PC-9 (cell line): ENCODE measurements at regions of chr11 and their contacts with region 1.

Region 1: GRCh38 chr11:105783216-105783615 is 173.3 kb downstream of the GRIA4 start:
- DNase-seq: no peak
- H3K4me3 ChIP-seq: no peak overlapping the region
- H3K27ac ChIP-seq: no peak overlapping the region
- H3K4me1 ChIP-seq: no peaks in the 10 kb centered on the region
- H3K27me3 ChIP-seq: no peaks in the 10 kb centered on the region
- CTCF ChIP-seq: no peak

Region 2: GRCh38 chr11:104817973-104818372 is 965.2 kb before region 1 on chr11:
- CTCF ChIA-PET with region 1: no interaction called
- POLR2A ChIA-PET with region 1: interaction called, 18 read pairs
- intact Hi-C with region 1: no loop called
- DNase-seq: peak in 1 of 2 experiments; percentile 18
- H3K4me3 ChIP-seq: no peak overlapping the region
- H3K27ac ChIP-seq: no peak overlapping the region
- H3K4me1 ChIP-seq: no peaks in the 10 kb centered on the region
- H3K27me3 ChIP-seq: no peaks in the 10 kb centered on the region
- CTCF ChIP-seq: no peak

Region 3: GRCh38 chr11:104934594-104934993 is 848.6 kb before region 1 on chr11:
- CTCF ChIA-PET with region 1: no interaction called
- POLR2A ChIA-PET with region 1: no interaction called
- intact Hi-C with region 1: no loop called
- DNase-seq: no peak
- H3K4me3 ChIP-seq: no peak overlapping the region
- H3K27ac ChIP-seq: no peak overlapping the region
- H3K4me1 ChIP-seq: no peaks in the 10 kb centered on the region
- H3K27me3 ChIP-seq: no peaks in the 10 kb centered on the region
- CTCF ChIP-seq: no peak

Region 4: DNA sequence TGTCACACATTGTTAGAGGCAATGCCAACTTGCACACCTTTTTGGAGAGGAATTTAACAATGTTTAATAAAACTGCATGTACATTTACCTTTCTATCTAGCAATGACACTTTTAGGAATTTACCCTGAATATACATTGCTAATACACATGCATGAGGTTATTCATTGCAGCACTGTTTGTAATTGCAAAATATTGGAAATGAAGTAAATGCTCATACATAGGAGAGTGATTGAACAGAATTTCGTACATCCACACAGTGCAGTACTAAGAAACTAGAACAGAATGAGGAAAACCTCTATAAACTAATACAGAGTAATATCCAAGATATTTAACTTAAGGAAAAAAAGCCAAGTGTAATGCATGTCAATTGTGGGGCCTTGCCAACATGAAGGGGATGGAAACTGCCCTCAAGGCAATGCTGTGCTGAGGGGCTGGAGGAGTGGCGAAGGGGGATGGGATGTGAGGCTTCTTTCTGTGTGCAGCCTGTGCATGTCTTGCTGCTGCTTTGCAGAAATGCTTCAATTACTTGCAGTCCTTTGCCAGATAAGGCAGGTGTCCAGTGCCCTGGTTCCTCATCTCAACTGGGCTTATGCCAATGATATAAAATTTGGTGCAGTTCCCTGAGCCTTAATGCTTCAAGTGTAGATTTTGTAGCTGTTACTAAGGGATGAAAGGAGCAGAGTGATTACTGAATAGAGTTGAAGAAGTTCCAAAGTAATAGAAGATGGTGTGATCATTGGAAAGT is 77.3 kb before region 1 on chr11:
- CTCF ChIA-PET with region 1: no interaction called
- POLR2A ChIA-PET with region 1: no interaction called
- intact Hi-C with region 1: no loop called
- DNase-seq: no peak
- H3K4me3 ChIP-seq: no peak overlapping the region
- H3K27ac ChIP-seq: no peak overlapping the region
- H3K4me1 ChIP-seq: no peaks in the 10 kb centered on the region
- H3K27me3 ChIP-seq: no peaks in the 10 kb centered on the region
- CTCF ChIP-seq: no peak